ENCODE measurements at regions of chr13 and their contacts with region 1.

Region 1: GRCh38 chr13:99656092-99656745 is 154.9 kb downstream of the TM9SF2 start:
- DNase-seq: peak; percentile 89
- H3K4me3 ChIP-seq: peak overlapping the region; percentile 49
- H3K27ac ChIP-seq: peak overlapping the region; percentile 90
- H3K4me1 ChIP-seq: peaks cover 41% of the 10 kb centered on the region
- H3K27me3 ChIP-seq: no peaks in the 10 kb centered on the region
- CTCF ChIP-seq: peak; percentile 95

Region 2: DNA sequence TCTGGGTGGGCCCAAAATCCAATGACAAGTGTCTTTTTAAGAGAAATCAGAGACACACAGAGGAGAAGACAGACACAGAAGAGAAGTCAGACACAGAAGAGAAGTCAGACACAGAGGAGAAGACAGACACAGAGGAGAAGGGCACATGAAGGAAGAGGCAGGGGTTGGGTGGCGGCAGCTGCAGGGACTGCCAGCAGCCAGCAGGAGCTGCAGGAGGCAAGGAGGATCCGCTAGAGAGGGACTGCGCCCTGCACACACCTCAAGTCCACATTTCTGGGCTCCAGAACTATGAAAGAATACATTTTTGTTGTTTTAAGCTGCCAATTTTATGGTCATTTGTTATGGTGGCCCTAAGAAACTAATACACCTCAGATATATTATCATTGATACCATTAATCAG is 174.7 kb after region 1 on chr13:
- CTCF ChIA-PET with region 1: no interaction called
- POLR2A ChIA-PET with region 1: no interaction called
- intact Hi-C with region 1: no loop called
- DNase-seq: no peak
- H3K4me3 ChIP-seq: no peak overlapping the region
- H3K27ac ChIP-seq: no peak overlapping the region
- H3K4me1 ChIP-seq: no peaks in the 10 kb centered on the region
- H3K27me3 ChIP-seq: no peaks in the 10 kb centered on the region
- CTCF ChIP-seq: no peak

Region 3: GRCh38 chr13:99916366-99917103 is 260.3 kb after region 1 on chr13:
- CTCF ChIA-PET with region 1: no interaction called
- POLR2A ChIA-PET with region 1: no interaction called
- intact Hi-C with region 1: loop called (anchors 2 kb)
- DNase-seq: peak; percentile 85
- H3K4me3 ChIP-seq: no peak overlapping the region
- H3K27ac ChIP-seq: no peak overlapping the region
- H3K4me1 ChIP-seq: peaks cover 19% of the 10 kb centered on the region
- H3K27me3 ChIP-seq: no peaks in the 10 kb centered on the region
- CTCF ChIP-seq: peak; percentile 99

Region 4: GRCh38 chr13:99969919-99970621 is 313.9 kb after region 1 on chr13:
- CTCF ChIA-PET with region 1: no interaction called
- POLR2A ChIA-PET with region 1: no interaction called
- intact Hi-C with region 1: loop called (anchors 5 kb)
- DNase-seq: peak; percentile 93
- H3K4me3 ChIP-seq: peak overlapping the region; percentile 91
- H3K27ac ChIP-seq: peak overlapping the region; percentile 98
- H3K4me1 ChIP-seq: peaks cover 31% of the 10 kb centered on the region
- H3K27me3 ChIP-seq: no peaks in the 10 kb centered on the region
- CTCF ChIP-seq: no peak

Region 5: DNA sequence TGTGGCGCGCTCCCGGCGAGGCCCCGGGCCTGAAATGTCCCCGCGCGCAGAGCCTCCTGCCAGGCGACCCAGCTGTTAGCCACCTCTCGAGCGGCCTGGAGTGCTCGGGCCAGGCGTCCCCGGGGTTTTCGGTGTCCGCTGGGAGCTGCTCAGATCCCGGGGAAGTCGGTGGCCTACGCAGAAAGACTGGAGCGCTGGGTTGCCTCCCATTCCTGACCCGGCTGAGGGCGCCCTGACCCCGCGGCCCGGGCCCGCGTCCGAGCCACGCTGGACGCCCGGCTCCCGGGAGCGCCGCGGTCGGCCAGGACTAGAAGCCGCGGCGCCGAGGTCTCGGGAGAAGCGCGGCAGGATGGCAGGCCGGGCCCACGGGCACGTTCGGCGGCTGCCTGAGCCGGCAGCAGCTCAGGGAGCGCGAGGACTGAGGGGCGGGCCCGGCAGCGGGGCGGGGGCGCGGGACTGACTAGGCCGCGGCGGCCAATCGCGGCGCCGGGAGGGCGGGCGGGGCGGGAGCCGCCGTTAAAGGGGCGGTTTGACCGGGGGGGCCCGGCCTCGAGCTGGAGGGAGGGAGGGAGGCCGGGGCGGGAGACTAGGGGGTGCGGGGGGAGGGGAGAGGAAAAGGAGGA is 324.1 kb after region 1 on chr13:
- CTCF ChIA-PET with region 1: no interaction called
- POLR2A ChIA-PET with region 1: no interaction called
- intact Hi-C with region 1: loop called (anchors 5 kb)
- DNase-seq: peak; percentile 96
- H3K4me3 ChIP-seq: peak overlapping the region; percentile 95
- H3K27ac ChIP-seq: peak overlapping the region; percentile 97
- H3K4me1 ChIP-seq: peaks cover 5% of the 10 kb centered on the region
- H3K27me3 ChIP-seq: no peaks in the 10 kb centered on the region
- CTCF ChIP-seq: no peak

Region 6: DNA sequence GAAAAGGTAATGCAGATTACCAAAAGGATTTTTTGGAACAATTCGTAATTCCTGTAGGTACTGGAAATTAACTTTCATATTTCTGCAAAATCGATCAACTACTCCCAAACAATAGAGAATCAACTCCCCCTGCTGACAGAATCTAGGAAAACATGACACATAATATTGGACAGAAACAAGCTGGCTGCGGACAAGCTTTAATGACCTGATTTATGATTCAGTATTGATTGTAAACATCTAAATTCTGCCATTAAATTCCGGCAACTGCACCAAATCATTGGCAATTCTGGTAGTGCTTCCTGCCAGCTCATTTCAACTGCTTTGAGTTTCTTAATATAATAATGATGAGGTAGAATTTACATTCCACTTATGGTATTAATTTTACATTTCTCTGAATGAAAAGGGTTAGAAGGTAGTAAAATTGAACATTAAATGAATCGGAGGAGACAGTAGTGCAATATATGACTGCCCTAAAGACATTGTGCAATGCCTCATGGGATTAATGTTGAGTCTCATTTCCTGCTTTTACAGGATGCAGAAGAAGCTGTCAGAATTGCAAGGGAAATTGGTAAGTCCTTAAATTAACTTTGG is 579.2 kb after region 1 on chr13:
- CTCF ChIA-PET with region 1: interaction called, 3 read pairs
- POLR2A ChIA-PET with region 1: no interaction called
- intact Hi-C with region 1: loop called (anchors 1 kb)
- DNase-seq: peak; percentile 99
- H3K4me3 ChIP-seq: peak overlapping the region; percentile 27
- H3K27ac ChIP-seq: peak overlapping the region; percentile 82
- H3K4me1 ChIP-seq: peaks cover 59% of the 10 kb centered on the region
- H3K27me3 ChIP-seq: no peaks in the 10 kb centered on the region
- CTCF ChIP-seq: peak; percentile 73

Region 7: GRCh38 chr13:100987953-100988352 is 1331.7 kb after region 1 on chr13:
- CTCF ChIA-PET with region 1: no interaction called
- POLR2A ChIA-PET with region 1: no interaction called
- intact Hi-C with region 1: loop called (anchors 10 kb)
- DNase-seq: peak; percentile 42
- H3K4me3 ChIP-seq: no peak overlapping the region
- H3K27ac ChIP-seq: no peak overlapping the region
- H3K4me1 ChIP-seq: peaks cover 20% of the 10 kb centered on the region
- H3K27me3 ChIP-seq: no peaks in the 10 kb centered on the region
- CTCF ChIP-seq: peak; percentile 54

Region 8: DNA sequence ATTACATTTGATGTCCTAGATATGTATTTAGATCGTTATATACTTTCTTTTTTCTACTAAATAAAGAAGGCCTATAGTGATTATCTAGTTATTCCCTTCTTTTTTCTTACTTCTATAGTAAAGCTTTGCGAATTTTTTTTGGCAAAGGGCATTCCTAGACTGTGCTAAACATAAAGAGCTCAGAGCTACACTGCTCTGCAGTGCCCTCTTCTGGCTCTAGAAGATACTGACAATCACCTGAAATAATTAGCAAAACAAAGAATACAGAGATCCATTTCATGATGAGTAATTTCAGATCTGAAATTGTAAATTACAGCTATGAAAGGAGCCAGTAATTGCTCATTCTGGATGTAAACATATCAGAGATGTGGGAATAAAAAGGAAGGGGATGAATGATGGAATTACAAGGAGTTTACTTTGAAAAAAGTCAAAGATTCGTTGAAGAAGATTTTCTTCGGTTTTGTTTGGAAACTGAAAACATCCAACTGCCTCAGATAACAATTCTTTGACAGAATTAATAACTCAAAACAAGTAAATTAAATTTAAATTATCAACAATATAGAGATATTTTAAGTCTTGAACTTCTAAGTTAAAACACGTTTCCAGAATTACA is 1471.6 kb after region 1 on chr13:
- CTCF ChIA-PET with region 1: no interaction called
- POLR2A ChIA-PET with region 1: no interaction called
- intact Hi-C with region 1: loop called (anchors 2 kb)
- DNase-seq: peak; percentile 71
- H3K4me3 ChIP-seq: no peak overlapping the region
- H3K27ac ChIP-seq: no peak overlapping the region
- H3K4me1 ChIP-seq: no peaks in the 10 kb centered on the region
- H3K27me3 ChIP-seq: peaks cover 8% of the 10 kb centered on the region
- CTCF ChIP-seq: peak; percentile 86